Common myeloid progenitor, CD34-positive (primary cell): ENCODE measurements at regions of chr1 and their contacts with region 1.

Region 1: DNA sequence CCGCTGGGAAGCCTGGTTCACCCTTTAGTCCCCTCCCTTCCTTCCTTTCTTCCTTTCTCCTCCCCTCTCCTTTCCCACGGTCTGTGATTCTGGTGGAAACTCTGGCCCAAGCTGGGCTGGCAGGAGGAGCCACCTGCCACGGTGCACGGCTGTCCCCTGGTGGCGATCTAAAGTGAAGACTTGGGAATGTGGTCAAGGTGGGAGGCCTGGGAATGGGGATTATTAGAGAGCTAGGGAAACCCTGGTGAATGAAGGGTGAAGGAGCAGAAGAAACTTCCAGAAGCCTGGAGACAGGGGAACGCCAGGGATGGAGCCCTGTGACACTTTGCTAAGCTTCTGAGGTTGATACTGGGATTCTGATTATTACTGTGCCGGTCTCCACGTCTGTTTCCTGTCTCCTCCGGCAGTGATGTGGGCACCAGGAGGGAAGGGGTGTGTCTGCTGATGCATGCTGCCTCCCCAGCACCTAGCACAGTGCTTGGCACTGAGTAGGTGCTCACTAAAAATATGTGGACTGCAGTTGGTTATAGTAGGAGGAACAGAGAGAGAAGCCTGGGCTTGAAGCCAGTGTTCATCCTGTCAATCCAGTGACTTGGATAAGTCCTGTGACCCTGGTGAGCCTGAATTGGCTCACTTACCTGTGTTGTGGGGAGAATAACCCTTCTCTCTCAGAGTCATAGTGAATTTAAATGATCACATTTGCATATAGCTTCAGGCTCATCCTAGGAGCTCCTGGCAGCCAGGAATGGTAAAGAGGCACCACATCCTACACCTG is 71.2 kb upstream of the NBPF3 start:
- DNase-seq: peak; percentile 52 to 64 (median 60)
- H3K4me3 ChIP-seq: no peak overlapping the region
- H3K27ac ChIP-seq: no peak overlapping the region
- H3K4me1 ChIP-seq: peaks cover 0 to 8% (median 2%) of the 10 kb centered on the region in 4 experiments
- H3K27me3 ChIP-seq: no peaks in the 10 kb centered on the region

Region 2: GRCh38 chr1:21232044-21232443 is 136.7 kb before region 1 on chr1:
- CTCF ChIA-PET with region 1: interaction called, 123 read pairs
- POLR2A ChIA-PET with region 1: interaction called, 3 read pairs
- DNase-seq: peak; percentile 36 to 60 (median 50)
- H3K4me3 ChIP-seq: no peak overlapping the region
- H3K27ac ChIP-seq: no peak overlapping the region
- H3K4me1 ChIP-seq: peaks cover 0 to 6% (median 3%) of the 10 kb centered on the region in 4 experiments
- H3K27me3 ChIP-seq: no peaks in the 10 kb centered on the region

Region 3: DNA sequence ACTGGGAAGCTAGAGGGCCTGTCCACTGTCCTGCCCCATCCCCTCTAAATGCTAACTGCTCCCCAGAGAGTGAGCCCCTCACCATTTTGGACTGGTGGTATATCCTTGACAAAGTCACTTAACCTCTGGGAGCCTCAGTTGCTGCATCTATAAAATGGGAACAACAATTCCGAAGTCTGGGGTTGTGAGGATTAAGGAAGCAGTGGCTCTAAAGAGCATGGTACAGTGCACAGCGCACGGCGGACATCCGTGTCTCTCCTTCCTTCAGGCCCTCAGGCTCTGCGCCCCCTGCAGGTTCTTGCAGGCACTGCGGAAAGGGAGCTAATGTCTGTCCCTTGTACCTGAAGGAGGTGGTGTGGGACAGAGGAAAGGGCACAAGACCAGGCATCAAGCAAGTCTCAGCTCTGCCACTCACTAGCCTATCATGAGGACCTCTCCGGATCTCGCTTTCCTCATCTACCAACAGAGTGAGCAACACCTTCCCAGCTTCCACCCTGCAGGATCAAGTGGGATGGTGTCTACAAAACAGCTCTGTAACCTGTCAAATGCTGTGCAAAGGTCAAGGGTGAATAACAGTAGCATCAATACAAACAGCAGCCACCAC is 98.5 kb before region 1 on chr1:
- CTCF ChIA-PET with region 1: interaction called, 33 read pairs
- POLR2A ChIA-PET with region 1: no interaction called
- DNase-seq: peak; percentile 64 to 77 (median 71)
- H3K4me3 ChIP-seq: no peak overlapping the region
- H3K27ac ChIP-seq: no peak overlapping the region
- H3K4me1 ChIP-seq: no peaks in the 10 kb centered on the region
- H3K27me3 ChIP-seq: no peaks in the 10 kb centered on the region

Region 4: DNA sequence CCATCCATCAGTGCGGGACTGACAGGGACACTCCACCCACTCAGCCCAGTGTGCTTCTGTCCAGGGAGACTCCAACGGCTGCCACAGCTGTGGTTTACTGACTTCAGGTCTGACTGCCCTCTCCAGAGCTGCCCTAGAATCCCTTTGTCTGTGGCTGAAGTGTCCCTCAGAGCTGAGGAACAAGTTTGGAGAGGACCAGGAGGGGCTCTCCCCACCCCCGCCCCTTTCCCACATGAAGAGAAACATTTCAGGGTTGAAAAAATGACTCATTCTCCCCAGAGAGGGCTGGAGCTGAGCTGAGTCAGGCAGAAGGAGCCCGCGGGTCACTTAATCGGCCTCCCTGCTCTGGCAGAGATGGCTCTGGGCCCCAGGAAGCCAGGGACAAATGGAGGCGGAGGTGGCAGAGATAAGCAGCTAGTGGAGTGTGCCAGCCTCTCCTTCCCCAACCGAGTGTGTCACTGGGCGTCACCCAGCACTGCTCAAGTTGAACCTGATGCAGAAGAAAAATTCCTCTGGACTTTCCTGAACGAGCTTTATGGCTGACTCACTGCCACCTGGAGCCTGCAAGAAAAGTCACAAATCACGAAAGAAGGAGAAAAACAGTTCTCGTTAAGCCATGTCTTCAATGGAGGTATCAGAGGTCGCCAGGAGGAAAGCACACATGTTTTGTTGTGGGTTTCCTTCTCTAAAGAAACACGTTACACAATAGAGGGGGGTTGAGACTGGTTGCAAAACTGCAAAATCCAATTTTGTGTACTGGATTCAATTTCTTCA is 44.1 kb before region 1 on chr1:
- CTCF ChIA-PET with region 1: interaction called, 23 read pairs
- POLR2A ChIA-PET with region 1: interaction called, 3 read pairs
- DNase-seq: peak; percentile 78 to 94 (median 91)
- H3K4me3 ChIP-seq: peak overlapping the region in 4 of 7 experiments; percentile 12 to 61 (median 40)
- H3K27ac ChIP-seq: peak overlapping the region; percentile 61 to 78
- H3K4me1 ChIP-seq: peaks cover 7 to 54% (median 47%) of the 10 kb centered on the region in 4 experiments
- H3K27me3 ChIP-seq: no peaks in the 10 kb centered on the region

Region 5: GRCh38 chr1:21468599-21468998 is 99.9 kb after region 1 on chr1:
- CTCF ChIA-PET with region 1: interaction called, 12 read pairs
- POLR2A ChIA-PET with region 1: no interaction called
- DNase-seq: peak; percentile 55 to 86 (median 63)
- H3K4me3 ChIP-seq: no peak overlapping the region
- H3K27ac ChIP-seq: no peak overlapping the region
- H3K4me1 ChIP-seq: peaks cover 0 to 9% (median 0%) of the 10 kb centered on the region in 4 experiments
- H3K27me3 ChIP-seq: no peaks in the 10 kb centered on the region

Region 6: DNA sequence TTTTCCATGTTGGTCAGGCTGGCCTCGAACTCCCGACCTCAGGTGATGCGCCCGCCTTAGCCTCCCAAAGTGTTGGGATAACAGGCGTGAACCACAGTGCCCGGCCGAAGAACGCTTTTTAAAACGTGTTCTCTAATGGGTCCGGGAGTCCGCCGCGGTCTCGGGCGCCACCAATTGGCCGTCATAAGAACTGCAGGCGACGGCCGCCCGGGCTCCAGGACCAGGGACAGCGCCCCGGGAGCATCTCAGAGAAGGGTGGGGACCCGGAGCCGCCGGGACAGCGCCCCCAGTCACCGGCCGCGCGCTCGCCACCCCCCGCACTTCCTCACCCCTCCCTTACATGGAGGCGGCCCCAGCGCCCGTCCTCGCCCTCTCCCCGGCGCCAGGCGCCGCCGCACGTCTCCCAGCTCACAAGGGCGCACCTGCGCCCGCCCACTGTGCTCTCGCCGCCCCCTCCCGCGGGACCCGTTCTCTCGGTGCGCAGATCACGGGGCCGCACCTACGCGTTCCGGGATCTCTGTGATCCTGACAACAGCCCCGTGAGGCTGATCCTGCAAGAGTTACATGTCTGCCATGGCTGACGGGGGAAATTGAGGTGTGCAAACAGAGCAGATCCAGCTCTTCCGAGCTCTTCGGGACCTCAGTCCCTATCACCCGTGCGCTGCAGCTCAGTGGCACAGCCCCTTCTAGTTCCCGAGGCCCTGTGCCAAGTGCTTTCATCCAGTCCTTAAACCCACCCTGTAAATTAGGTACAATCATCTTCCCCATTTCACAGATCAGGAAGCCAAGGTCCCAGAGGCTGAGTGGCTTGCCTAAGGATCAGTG is 290.6 kb after region 1 on chr1:
- CTCF ChIA-PET with region 1: interaction called, 16 read pairs
- POLR2A ChIA-PET with region 1: no interaction called
- DNase-seq: peak; percentile 74 to 90 (median 85)
- H3K4me3 ChIP-seq: peak overlapping the region in 4 of 7 experiments; percentile 19 to 45 (median 42)
- H3K27ac ChIP-seq: no peak overlapping the region
- H3K4me1 ChIP-seq: peaks cover 0 to 13% (median 11%) of the 10 kb centered on the region in 4 experiments
- H3K27me3 ChIP-seq: peaks cover 0 to 15% (median 9%) of the 10 kb centered on the region in 5 experiments

Region 7: GRCh38 chr1:21716169-21716568 is 347.5 kb after region 1 on chr1:
- CTCF ChIA-PET with region 1: no interaction called
- POLR2A ChIA-PET with region 1: no interaction called
- DNase-seq: peak in 1 of 3 donors; percentile 9
- H3K4me3 ChIP-seq: no peak overlapping the region
- H3K27ac ChIP-seq: no peak overlapping the region
- H3K4me1 ChIP-seq: peaks cover 3 to 6% (median 3%) of the 10 kb centered on the region in 4 experiments
- H3K27me3 ChIP-seq: no peaks in the 10 kb centered on the region